ENCODE measurements at regions of chr6 and their contacts with region 1.

Region 1: DNA sequence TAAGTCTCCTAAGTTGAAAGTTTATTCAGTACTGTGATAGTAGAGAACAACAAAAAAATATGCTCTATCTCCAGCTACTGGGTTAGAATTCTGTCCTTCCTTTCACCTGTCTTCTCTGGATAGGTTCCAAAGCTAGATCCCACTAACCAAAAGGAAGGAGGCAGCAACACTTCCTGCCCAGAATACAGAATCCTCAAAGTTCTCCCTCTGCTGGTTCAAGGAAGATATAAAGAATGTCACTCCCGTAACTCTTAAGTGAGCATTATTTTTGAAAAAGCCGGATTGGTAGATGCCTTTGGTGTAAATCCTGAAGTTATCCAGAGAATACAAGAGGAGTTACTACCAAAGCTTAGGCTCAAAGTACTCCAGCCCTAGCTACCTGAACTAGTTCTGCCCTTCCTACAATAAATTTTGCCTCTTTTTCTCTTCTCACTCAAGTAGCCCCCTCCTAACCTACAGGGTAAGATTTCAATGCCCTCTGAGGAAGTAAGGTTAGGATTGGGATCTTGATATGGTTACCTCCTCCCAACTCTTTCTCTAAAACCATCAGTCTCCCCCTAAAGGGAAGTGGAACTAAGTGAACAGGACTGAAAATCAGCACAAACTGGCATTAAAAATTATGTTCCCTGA is 26.0 kb upstream of the CRIP3 start:
- DNase-seq: peak; percentile 32 to 51 (median 43)
- H3K4me3 ChIP-seq: no peak overlapping the region
- H3K27ac ChIP-seq: no peak overlapping the region
- H3K4me1 ChIP-seq: peaks cover 5 to 13% (median 8%) of the 10 kb centered on the region in 4 experiments
- H3K27me3 ChIP-seq: no peaks in the 10 kb centered on the region

Region 2: GRCh38 chr6:43174263-43175112 is 160.1 kb before region 1 on chr6:
- CTCF ChIA-PET with region 1: no interaction called
- POLR2A ChIA-PET with region 1: no interaction called
- DNase-seq: peak; percentile 98 to 99 (median 98)
- H3K4me3 ChIP-seq: peak overlapping the region in 5 of 7 experiments; percentile 38 to 90 (median 61)
- H3K27ac ChIP-seq: peak overlapping the region; percentile 52 to 85
- H3K4me1 ChIP-seq: peaks cover 17 to 46% (median 40%) of the 10 kb centered on the region in 4 experiments
- H3K27me3 ChIP-seq: no peaks in the 10 kb centered on the region

Region 3: DNA sequence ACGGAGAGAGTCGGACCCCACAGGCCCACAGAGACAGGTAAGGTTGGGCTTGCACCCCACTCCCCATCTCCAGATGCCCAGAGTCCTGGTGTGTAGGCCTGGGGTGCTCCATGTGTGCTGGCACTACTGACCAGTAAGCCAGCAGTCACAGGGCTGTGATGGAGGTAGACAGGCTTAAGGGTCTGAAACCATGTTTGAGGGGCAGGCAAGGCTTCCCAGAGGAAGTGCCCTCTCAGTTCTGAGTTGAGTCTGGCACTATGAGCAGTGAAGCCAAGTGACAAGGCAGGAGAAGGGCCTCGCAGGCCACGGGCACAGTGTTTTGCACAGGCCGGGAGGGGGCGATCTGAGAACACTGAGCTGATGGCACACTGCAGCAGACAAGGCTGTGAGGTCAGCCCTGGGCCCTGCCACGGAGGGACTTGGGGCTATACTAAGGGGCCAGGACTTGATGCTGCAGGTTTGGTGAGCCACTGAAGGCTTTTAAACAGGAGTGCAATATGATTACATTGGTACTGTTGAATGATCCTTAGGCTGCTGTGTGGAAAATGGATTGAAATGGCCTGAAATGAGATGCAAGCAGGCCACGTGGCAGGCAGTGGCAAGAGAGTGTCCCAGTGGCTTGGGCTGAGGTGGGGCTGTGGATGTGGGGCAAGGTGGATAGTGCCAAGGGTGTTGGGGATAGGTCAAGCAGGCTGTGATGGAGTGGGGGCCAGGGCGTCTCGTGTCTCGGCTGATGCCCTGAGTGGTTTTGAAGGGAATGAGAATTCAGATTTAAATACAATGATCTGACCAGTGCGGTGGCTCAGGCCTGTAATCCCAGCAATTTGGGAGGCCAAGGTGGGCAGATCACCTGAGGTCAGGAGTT is 71.0 kb before region 1 on chr6:
- CTCF ChIA-PET with region 1: interaction called, 35 read pairs
- POLR2A ChIA-PET with region 1: no interaction called
- DNase-seq: peak; percentile 71 to 83 (median 79)
- H3K4me3 ChIP-seq: no peak overlapping the region
- H3K27ac ChIP-seq: no peak overlapping the region
- H3K4me1 ChIP-seq: peaks cover 0 to 4% (median under 1%) of the 10 kb centered on the region in 4 experiments
- H3K27me3 ChIP-seq: peaks cover 0 to 16% (median 7%) of the 10 kb centered on the region in 5 experiments

Region 4: GRCh38 chr6:43308101-43308989 is 26.2 kb before region 1 on chr6 and contains the start of gene CRIP3:
- CTCF ChIA-PET with region 1: interaction called, 28 read pairs
- POLR2A ChIA-PET with region 1: no interaction called
- DNase-seq: peak; percentile 61 to 79 (median 73)
- H3K4me3 ChIP-seq: peak within 1 kb of the TSS; percentile 10 to 74 (median 32)
- H3K27ac ChIP-seq: no peak within 1 kb of the TSS
- H3K4me1 ChIP-seq: peaks cover 22 to 43% (median 26%) of the 10 kb centered on the region in 4 experiments
- H3K27me3 ChIP-seq: peaks cover 0 to 8% (median 0%) of the 10 kb centered on the region in 5 experiments

Region 5: GRCh38 chr6:43355862-43356590 is 21.4 kb after region 1 on chr6:
- CTCF ChIA-PET with region 1: interaction called, 33 read pairs
- POLR2A ChIA-PET with region 1: no interaction called
- DNase-seq: peak; percentile 19 to 60 (median 53)
- H3K4me3 ChIP-seq: no peak overlapping the region
- H3K27ac ChIP-seq: no peak overlapping the region
- H3K4me1 ChIP-seq: no peaks in the 10 kb centered on the region
- H3K27me3 ChIP-seq: no peaks in the 10 kb centered on the region